A673 (cell line): ENCODE measurements at regions of chr2 and their contacts with region 1.

Region 1: GRCh38 chr2:4588606-4589005 is 885.2 kb downstream of the DCDC2C start:
- DNase-seq: peak; percentile 65
- H3K4me3 ChIP-seq: peak overlapping the region; percentile 38
- H3K27ac ChIP-seq: peak overlapping the region; percentile 97
- H3K4me1 ChIP-seq: peaks cover 38% of the 10 kb centered on the region
- H3K27me3 ChIP-seq: no peaks in the 10 kb centered on the region
- CTCF ChIP-seq: no peak

Region 2: GRCh38 chr2:3959372-3959771 is 629.2 kb before region 1 on chr2:
- CTCF ChIA-PET with region 1: interaction called, 3 read pairs
- POLR2A ChIA-PET with region 1: interaction called, 6 read pairs
- intact Hi-C with region 1: loop called (anchors 1 kb)
- DNase-seq: peak; percentile 58
- H3K4me3 ChIP-seq: no peak overlapping the region
- H3K27ac ChIP-seq: peak overlapping the region; percentile 78
- H3K4me1 ChIP-seq: peaks cover 70% of the 10 kb centered on the region
- H3K27me3 ChIP-seq: no peaks in the 10 kb centered on the region
- CTCF ChIP-seq: peak; percentile 89

Region 3: DNA sequence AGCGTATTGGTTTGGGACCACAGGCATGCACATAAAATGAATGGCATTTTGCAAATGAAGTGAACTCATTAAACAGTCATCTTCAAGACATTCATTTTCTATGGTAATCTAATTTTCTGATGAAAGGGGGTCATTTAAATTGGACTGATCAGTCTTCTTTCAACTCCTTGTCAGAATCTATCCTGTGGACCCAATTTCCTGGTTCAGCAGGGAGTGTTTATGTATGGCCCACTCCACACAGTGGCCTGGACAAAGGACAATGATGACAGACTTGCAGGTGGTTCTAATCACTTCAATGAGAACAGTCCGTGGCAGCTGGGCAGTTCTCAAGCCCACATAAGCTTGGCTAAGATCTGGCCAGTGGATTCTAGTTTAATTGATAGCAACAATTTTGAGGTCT is 437.1 kb before region 1 on chr2:
- CTCF ChIA-PET with region 1: interaction called, 5 read pairs
- POLR2A ChIA-PET with region 1: interaction called, 5 read pairs
- intact Hi-C with region 1: loop called (anchors 1 kb)
- DNase-seq: peak; percentile 94
- H3K4me3 ChIP-seq: no peak overlapping the region
- H3K27ac ChIP-seq: peak overlapping the region; percentile 96
- H3K4me1 ChIP-seq: peaks cover 31% of the 10 kb centered on the region
- H3K27me3 ChIP-seq: no peaks in the 10 kb centered on the region
- CTCF ChIP-seq: no peak

Region 4: GRCh38 chr2:4653991-4654390 is 65.4 kb after region 1 on chr2:
- CTCF ChIA-PET with region 1: no interaction called
- POLR2A ChIA-PET with region 1: no interaction called
- intact Hi-C with region 1: loop called (anchors 2 kb)
- DNase-seq: peak; percentile 87
- H3K4me3 ChIP-seq: no peak overlapping the region
- H3K27ac ChIP-seq: peak overlapping the region; percentile 88
- H3K4me1 ChIP-seq: peaks cover 38% of the 10 kb centered on the region
- H3K27me3 ChIP-seq: no peaks in the 10 kb centered on the region
- CTCF ChIP-seq: no peak

Region 5: GRCh38 chr2:4762951-4763376 is 174.4 kb after region 1 on chr2:
- CTCF ChIA-PET with region 1: interaction called, 8 read pairs
- POLR2A ChIA-PET with region 1: interaction called, 7 read pairs
- intact Hi-C with region 1: loop called (anchors 1 kb)
- DNase-seq: peak; percentile 94
- H3K4me3 ChIP-seq: no peak overlapping the region
- H3K27ac ChIP-seq: peak overlapping the region; percentile 84
- H3K4me1 ChIP-seq: peaks cover 42% of the 10 kb centered on the region
- H3K27me3 ChIP-seq: no peaks in the 10 kb centered on the region
- CTCF ChIP-seq: peak; percentile 93